Activated CD8-positive, alpha-beta memory T cell treated with anti-CD3 and anti-CD28 coated beads, Interleukin-2, amount 10 ng/mL, durations not matched to agents 7 days and 5 days (primary cell): ENCODE measurements at regions of chr6 and their contacts with region 1.

Region 1: GRCh38 chr6:36360241-36361054 is 23.8 kb upstream of the BNIP5 start:
- DNase-seq: peak; percentile 82
- ATAC-seq: peak; percentile 87
- H3K4me3 Mint-ChIP-seq: no peak overlapping the region
- H3K27ac Mint-ChIP-seq: no peak overlapping the region
- H3K4me1 Mint-ChIP-seq: peaks cover 37% of the 10 kb centered on the region
- H3K27me3 Mint-ChIP-seq: peaks cover 12% of the 10 kb centered on the region

Region 2: DNA sequence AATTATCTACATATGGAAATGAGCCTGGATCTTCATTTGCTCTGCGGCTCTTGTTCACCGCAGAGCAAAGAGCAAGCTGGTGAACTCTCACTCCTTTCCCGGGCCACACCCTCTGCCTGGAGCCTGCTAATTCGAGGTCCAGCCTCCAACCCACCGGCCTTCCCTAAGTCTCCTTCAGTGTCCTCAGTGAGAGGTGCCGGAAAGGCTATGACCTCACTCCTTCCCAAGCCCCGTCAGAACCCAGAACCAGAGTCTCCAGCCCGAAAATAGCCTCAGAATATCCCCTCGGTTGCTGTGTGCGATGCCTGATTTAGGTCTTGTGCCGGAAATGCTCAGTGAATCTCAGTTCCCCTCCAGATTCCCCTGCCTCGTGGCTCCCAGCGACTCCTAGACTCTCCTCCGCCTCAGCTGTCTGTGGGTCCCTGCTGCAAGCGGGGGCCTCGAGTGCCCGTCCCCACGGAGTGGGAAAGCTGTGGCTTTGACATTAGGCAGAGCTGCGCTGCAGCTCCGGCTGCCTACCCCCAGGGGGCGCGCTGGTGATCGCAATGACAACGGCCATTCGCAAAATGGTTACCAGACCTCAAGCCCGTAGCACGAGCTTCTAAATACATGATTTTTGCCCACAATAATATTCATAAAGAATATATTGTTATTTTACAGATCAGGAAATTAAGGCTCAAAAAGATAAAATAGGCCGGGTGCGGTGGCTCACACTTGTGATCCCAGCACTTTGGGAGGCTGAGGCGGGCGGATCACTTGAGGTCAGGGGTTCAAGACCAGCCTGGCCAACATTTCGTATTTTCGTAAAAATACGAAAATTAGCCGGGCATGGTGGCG is 19.6 kb before region 1 on chr6:
- CTCF ChIA-PET with region 1: interaction called, 91 read pairs
- DNase-seq: peak; percentile 79
- ATAC-seq: peak; percentile 86
- H3K4me3 Mint-ChIP-seq: no peak overlapping the region
- H3K27ac Mint-ChIP-seq: no peak overlapping the region
- H3K4me1 Mint-ChIP-seq: peaks cover 22% of the 10 kb centered on the region
- H3K27me3 Mint-ChIP-seq: peaks cover 36% of the 10 kb centered on the region

Region 3: GRCh38 chr6:36345681-36346414 is 14.6 kb before region 1 on chr6:
- CTCF ChIA-PET with region 1: interaction called, 91 read pairs
- DNase-seq: no peak
- ATAC-seq: no peak
- H3K4me3 Mint-ChIP-seq: no peak overlapping the region
- H3K27ac Mint-ChIP-seq: no peak overlapping the region
- H3K4me1 Mint-ChIP-seq: peaks cover under 1% of the 10 kb centered on the region
- H3K27me3 Mint-ChIP-seq: peaks cover 19% of the 10 kb centered on the region